RWPE1 (cell line): ENCODE measurements at regions of chr19 and their contacts with region 1.

Region 1: GRCh38 chr19:52992749-52993322 is 20.9 kb upstream of the ERVV-1 start:
- DNase-seq: no peak
- H3K27ac ChIP-seq: 0 out of 2 replicates have a peak overlapping the region, but pooled peaks have one; percentile 9
- CTCF ChIP-seq: no peak

Region 2: GRCh38 chr19:51525686-51526085 is 1467.2 kb before region 1 on chr19:
- CTCF ChIA-PET with region 1: no interaction called
- POLR2A ChIA-PET with region 1: no interaction called
- DNase-seq: no peak
- H3K27ac ChIP-seq: no peak overlapping the region
- CTCF ChIP-seq: no peak

Region 3: DNA sequence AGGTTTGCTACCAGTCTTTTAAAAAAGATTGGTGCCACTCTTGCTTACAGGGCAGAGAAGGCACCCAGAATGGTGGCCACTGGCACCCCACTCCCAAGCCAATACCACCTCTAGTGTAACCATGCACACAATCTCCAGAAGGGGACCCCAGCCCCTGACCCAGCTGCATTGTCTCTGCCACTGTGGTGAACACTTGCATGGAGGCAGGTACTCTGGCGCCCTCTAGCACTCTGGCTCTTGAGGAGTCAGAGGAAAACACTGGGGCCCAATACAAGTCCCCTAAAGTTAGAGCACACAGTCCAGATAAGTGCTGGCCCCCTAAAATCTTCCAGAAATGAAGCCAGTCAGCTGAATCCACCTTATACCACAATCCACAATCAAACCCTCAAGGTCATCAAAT is 26.8 kb after region 1 on chr19:
- CTCF ChIA-PET with region 1: no interaction called
- POLR2A ChIA-PET with region 1: no interaction called
- DNase-seq: no peak
- H3K27ac ChIP-seq: no peak overlapping the region
- CTCF ChIP-seq: no peak

Region 4: DNA sequence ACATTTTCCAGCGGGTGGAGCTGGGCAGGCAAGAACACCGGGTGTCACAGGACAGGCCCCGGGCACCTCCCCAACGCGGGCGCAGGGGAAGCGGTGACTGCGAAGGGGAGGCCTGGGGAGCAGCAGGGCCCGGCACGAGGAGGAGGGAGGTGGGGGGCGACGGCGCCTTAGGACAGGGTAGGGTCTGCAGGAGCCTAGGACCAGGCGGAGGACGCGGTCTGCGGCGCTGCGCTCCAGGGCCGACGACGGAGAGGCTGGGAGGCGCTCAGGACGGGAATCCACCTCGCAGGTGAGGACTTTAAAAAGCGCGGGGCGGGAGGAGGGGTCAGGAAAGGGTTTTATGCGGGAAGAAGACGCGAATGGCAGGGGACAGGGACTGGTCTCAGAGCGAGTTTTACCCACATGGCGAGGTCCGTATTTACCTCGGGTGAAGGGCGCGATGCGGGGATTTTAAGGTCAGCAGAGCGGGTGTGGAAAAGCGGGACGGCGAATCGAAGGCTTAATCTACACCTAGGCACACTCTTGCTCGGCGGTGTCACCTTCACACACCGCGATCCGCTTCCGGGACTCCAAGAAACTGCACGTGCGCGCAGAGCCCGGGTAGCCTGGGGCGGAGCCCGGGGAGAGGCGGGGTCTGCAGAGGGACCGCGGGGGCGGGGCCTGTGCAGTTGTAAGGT is 65.2 kb after region 1 on chr19:
- CTCF ChIA-PET with region 1: no interaction called
- POLR2A ChIA-PET with region 1: interaction called, 14 read pairs
- DNase-seq: peak; percentile 35
- H3K27ac ChIP-seq: no peak overlapping the region
- CTCF ChIP-seq: no peak

Region 5: DNA sequence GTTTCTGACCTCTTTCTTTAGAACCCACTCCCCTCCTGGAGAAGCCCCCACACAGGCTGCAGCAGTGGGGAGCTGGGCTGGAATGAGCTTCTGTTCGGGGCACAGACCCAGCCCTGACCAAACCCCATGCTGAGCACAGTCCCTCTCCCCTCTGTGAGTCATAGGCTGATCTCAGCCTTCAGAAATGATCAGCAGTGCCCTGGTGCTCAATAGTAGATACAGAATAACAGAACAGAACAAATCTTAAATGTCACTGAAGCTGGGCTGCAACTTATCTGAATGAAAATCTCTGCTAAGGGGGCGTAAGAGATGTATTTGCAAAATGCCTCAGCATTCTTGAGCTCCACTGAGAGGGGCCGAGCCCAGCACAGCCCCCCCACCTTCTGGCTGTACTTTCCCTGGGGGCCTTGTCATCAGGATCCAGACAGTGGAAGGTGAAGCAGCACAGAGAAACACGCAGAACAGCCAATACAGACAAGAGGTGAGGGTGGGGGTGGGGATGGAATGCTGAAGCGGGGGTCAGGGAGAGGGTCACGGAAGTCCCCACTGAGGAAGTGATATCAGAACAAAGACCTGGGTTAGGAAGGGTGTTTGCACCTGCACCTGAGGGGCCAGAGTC is 190.4 kb after region 1 on chr19:
- CTCF ChIA-PET with region 1: no interaction called
- POLR2A ChIA-PET with region 1: no interaction called
- DNase-seq: no peak
- H3K27ac ChIP-seq: no peak overlapping the region
- CTCF ChIP-seq: no peak